ENCODE measurements at regions of chr10 and their contacts with region 1.

Region 1: DNA sequence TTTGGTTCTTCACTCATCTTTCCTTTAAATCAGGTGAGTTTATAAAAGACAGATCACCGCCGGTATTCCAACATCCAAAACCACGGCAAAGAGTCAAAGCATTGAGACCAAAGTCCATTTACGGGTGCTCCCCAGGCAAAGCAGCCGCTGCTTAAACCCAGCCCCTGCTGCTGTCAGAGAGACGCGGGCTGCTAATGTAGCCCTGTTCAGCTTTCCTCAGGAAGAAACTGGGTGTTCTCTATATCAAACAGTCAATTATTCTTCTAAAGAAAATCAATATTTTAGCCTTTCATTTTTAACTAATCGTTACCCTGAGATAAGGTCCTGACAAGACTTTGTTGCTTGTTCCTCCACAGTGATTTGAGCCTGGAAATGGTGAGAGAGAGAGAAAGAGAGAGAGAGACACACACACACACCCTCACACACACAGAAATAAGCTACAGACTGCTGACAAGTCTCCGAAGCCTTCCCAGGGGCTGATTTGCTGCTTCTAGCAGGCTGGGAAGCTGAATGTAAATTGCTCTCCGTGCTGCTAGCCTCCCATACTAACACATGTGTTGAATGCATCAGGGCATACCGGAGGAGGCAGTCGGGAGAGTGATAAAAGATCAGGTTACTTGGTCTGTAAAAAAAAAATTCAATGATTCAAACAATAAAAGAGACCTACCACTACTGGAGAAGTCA is 183.0 kb upstream of the ANK3 start:
- DNase-seq: no peak
- H3K4me3 ChIP-seq: peak overlapping the region; percentile 16 to 45 (median 34)
- H3K27ac ChIP-seq: peak overlapping the region; percentile 5 to 68 (median 52)
- H3K4me1 ChIP-seq: peaks cover 0 to 36% (median 24%) of the 10 kb centered on the region in 4 donors
- H3K27me3 ChIP-seq: no peaks in the 10 kb centered on the region
- CTCF ChIP-seq: no peak
- EP300 ChIP-seq: no peak
- POLR2A ChIP-seq: no peak

Region 2: DNA sequence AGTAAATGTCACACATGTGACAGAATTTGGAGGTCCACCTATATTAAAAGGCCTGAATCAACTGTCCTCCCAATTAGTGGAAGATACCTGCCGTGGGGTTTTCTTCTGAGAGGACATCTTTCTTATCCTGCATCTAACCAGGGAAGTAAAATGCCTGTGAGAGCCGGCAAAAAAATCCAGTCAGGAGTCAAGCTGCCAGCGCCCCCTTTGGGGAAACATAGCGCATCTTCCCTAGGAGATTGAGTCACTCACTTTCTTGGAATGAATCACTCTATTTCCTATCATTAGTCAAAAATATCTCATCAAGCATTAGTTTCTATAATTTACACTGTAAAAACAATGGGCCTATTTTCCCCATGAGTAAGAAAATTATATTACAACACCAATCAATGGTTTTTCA is 116.6 kb before region 1 on chr10:
- intact Hi-C with region 1: loop called (anchors 10 kb)
- DNase-seq: no peak
- H3K4me3 ChIP-seq: no peak overlapping the region
- H3K27ac ChIP-seq: no peak overlapping the region
- H3K4me1 ChIP-seq: peaks cover 0 to 14% (median 10%) of the 10 kb centered on the region in 4 donors
- H3K27me3 ChIP-seq: no peaks in the 10 kb centered on the region
- CTCF ChIP-seq: no peak
- EP300 ChIP-seq: no peak
- POLR2A ChIP-seq: no peak

Region 3: GRCh38 chr10:60495338-60496055 is 77.2 kb before region 1 on chr10:
- intact Hi-C with region 1: no loop called
- DNase-seq: no peak
- H3K4me3 ChIP-seq: no peak overlapping the region
- H3K27ac ChIP-seq: no peak overlapping the region
- H3K4me1 ChIP-seq: peaks cover 0 to 16% (median 6%) of the 10 kb centered on the region in 4 donors
- H3K27me3 ChIP-seq: no peaks in the 10 kb centered on the region
- CTCF ChIP-seq: no peak
- EP300 ChIP-seq: no peak
- POLR2A ChIP-seq: no peak

Region 4: GRCh38 chr10:60686904-60687303 is 114.3 kb after region 1 on chr10:
- intact Hi-C with region 1: no loop called
- DNase-seq: no peak
- H3K4me3 ChIP-seq: no peak overlapping the region
- H3K27ac ChIP-seq: no peak overlapping the region
- H3K4me1 ChIP-seq: no peaks in the 10 kb centered on the region
- H3K27me3 ChIP-seq: no peaks in the 10 kb centered on the region
- CTCF ChIP-seq: no peak
- EP300 ChIP-seq: no peak
- POLR2A ChIP-seq: no peak